ENCODE measurements at regions of chr17 and their contacts with region 1.

Region 1: DNA sequence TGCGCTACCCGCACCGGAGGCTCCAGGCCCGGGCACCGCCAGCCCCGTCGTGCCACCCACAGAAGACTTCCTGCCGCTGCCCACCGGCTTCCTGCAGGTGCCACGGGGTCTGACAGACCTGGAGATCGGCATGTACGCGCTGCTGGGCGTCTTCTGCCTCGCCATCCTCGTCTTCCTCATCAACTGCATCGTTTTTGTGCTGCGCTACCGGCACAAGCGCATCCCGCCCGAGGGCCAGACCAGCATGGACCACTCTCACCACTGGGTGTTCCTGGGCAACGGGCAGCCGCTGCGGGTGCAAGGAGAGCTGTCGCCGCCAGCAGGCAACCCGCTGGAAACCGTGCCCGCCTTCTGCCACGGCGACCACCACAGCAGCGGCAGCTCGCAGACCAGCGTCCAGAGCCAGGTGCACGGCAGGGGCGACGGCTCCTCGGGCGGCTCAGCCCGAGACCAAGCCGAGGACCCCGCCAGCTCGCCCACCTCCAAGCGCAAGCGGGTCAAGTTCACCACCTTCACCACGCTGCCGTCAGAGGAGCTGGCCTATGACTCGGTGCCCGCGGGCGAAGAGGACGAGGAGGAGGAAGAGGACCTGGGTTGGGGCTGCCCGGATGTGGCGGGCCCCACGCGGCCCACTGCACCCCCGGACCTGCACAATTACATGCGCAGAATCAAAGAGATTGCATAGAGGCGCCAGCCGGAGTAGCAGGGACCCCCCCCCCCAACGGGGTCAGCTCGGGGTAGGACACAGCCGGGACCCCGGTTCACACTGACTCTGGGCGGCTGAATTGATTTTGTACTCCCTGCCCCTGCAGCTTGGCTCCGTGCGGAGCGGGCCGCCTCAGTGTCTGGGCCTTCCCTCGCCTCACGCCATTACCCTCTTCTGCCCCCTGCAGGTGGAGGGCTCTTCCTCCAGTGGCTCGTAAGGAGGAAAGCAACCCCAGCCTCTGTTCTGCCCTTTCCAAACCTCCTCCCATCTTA is 58.5 kb downstream of the TMEM132E start:
- DNase-seq: peak; percentile 63 to 86 (median 80)
- ATAC-seq: peak; percentile 96
- H3K4me3 ChIP-seq: peak overlapping the region; percentile 68
- H3K4me3 Mint-ChIP-seq: peak overlapping the region; percentile 30 to 93 (median 89)
- H3K27ac ChIP-seq: peak overlapping the region; percentile 17
- H3K27ac Mint-ChIP-seq: peak overlapping the region in 6 of 9 donors; percentile 25 to 76 (median 56)
- H3K4me1 ChIP-seq: peaks cover 4 to 12% of the 10 kb centered on the region in 2 donors
- H3K4me1 Mint-ChIP-seq: peaks cover 0 to 19% (median 6%) of the 10 kb centered on the region in 7 donors
- H3K27me3 ChIP-seq: no peaks in the 10 kb centered on the region
- H3K27me3 Mint-ChIP-seq: peaks cover 0 to 35% (median 3%) of the 10 kb centered on the region in 5 donors

Region 2: GRCh38 chr17:34420254-34420766 is 217.5 kb before region 1 on chr17:
- CTCF ChIA-PET with region 1: interaction called, 6 read pairs
- POLR2A ChIA-PET with region 1: no interaction called
- intact Hi-C with region 1: loop called (anchors 1 kb)
- DNase-seq: peak; percentile 20 to 68 (median 50)
- ATAC-seq: peak; percentile 67
- H3K4me3 ChIP-seq: no peak overlapping the region
- H3K4me3 Mint-ChIP-seq: no peak overlapping the region
- H3K27ac ChIP-seq: no peak overlapping the region
- H3K27ac Mint-ChIP-seq: peak overlapping the region in 1 of 9 donors; percentile 31
- H3K4me1 ChIP-seq: no peaks in the 10 kb centered on the region
- H3K4me1 Mint-ChIP-seq: peaks cover 0 to 8% (median 4%) of the 10 kb centered on the region in 7 donors
- H3K27me3 ChIP-seq: no peaks in the 10 kb centered on the region
- H3K27me3 Mint-ChIP-seq: peaks cover 19 to 58% (median 40%) of the 10 kb centered on the region in 5 donors

Region 3: GRCh38 chr17:34562387-34562786 is 75.5 kb before region 1 on chr17:
- CTCF ChIA-PET with region 1: no interaction called
- POLR2A ChIA-PET with region 1: no interaction called
- intact Hi-C with region 1: loop called in 1 of 2 experiments (anchors 1 kb)
- DNase-seq: peak in 1 of 9 donors; percentile 19
- ATAC-seq: peak; percentile 42
- H3K4me3 ChIP-seq: no peak overlapping the region
- H3K4me3 Mint-ChIP-seq: no peak overlapping the region
- H3K27ac ChIP-seq: no peak overlapping the region
- H3K27ac Mint-ChIP-seq: no peak overlapping the region
- H3K4me1 ChIP-seq: no peaks in the 10 kb centered on the region
- H3K4me1 Mint-ChIP-seq: no peaks in the 10 kb centered on the region
- H3K27me3 ChIP-seq: no peaks in the 10 kb centered on the region
- H3K27me3 Mint-ChIP-seq: peaks cover 7 to 16% (median 12%) of the 10 kb centered on the region in 5 donors

Region 4: GRCh38 chr17:34840750-34841149 is 202.9 kb after region 1 on chr17:
- CTCF ChIA-PET with region 1: no interaction called
- POLR2A ChIA-PET with region 1: no interaction called
- intact Hi-C with region 1: loop called in 1 of 2 experiments (anchors 5 kb)
- DNase-seq: peak in 7 of 9 donors; percentile 25 to 64 (median 61)
- ATAC-seq: peak; percentile 61
- H3K4me3 ChIP-seq: peak overlapping the region; percentile 17
- H3K4me3 Mint-ChIP-seq: peak overlapping the region in 7 of 10 donors; percentile 22 to 70 (median 52)
- H3K27ac ChIP-seq: peak overlapping the region; percentile 30
- H3K27ac Mint-ChIP-seq: peak overlapping the region in 7 of 9 donors; percentile 81 to 94 (median 89)
- H3K4me1 ChIP-seq: peaks cover 4 to 51% of the 10 kb centered on the region in 2 donors
- H3K4me1 Mint-ChIP-seq: peaks cover 0 to 21% (median 6%) of the 10 kb centered on the region in 7 donors
- H3K27me3 ChIP-seq: no peaks in the 10 kb centered on the region
- H3K27me3 Mint-ChIP-seq: peaks cover 0 to 6% (median 0%) of the 10 kb centered on the region in 5 donors

Measured in naive thymus-derived CD4-positive, alpha-beta T cell (primary cell).